Right cardiac atrium (tissue), 5 donors: ENCODE measurements at regions of chr5 and their contacts with region 1.

Region 1: GRCh38 chr5:19608444-19609002 is 379.5 kb downstream of the CDH18 start:
- DNase-seq: no peak
- ATAC-seq: no peak
- H3K4me3 ChIP-seq: no peak overlapping the region
- H3K27ac ChIP-seq: no peak overlapping the region
- H3K4me1 ChIP-seq: no peaks in the 10 kb centered on the region
- H3K27me3 ChIP-seq: no peaks in the 10 kb centered on the region

Region 2: DNA sequence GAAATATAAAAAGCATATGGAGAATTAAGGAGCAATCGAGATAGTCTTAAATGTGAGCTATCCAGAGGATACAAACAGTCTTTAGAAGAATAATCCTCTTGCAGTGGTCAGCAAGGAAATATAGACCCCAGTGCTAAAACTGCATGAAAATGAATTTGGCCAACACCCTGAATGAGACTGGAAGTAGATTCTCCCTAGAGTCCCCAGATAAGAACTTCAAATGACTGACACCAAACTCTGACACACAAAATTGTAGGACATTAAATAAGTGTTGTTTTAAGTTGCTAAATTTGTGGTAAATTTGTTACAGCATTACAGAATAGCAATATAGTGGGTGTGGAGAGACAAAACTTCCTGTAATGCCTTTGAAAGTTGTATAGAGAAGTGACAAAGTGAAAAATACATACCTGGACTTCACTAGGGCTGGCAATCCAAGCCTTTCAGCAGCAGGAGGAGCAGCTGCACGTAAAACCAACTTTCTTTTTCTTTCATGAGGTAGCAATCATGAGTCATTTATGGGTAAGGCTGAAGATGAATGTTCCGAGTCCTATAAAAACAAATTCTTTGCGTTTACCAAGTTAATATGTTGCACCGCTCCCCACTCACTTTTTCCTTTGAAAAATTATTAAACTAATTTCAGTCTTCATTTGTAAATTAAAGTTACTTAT is 836.2 kb before region 1 on chr5:
- intact Hi-C with region 1: loop called in 1 of 4 experiments (anchors 10 kb)
- DNase-seq: no peak
- ATAC-seq: no peak
- H3K4me3 ChIP-seq: no peak overlapping the region
- H3K27ac ChIP-seq: no peak overlapping the region
- H3K4me1 ChIP-seq: no peaks in the 10 kb centered on the region
- H3K27me3 ChIP-seq: no peaks in the 10 kb centered on the region

Region 3: GRCh38 chr5:18932081-18932480 is 676.4 kb before region 1 on chr5:
- intact Hi-C with region 1: no loop called
- DNase-seq: no peak
- ATAC-seq: no peak
- H3K4me3 ChIP-seq: no peak overlapping the region
- H3K27ac ChIP-seq: no peak overlapping the region
- H3K4me1 ChIP-seq: no peaks in the 10 kb centered on the region
- H3K27me3 ChIP-seq: no peaks in the 10 kb centered on the region

Region 4: DNA sequence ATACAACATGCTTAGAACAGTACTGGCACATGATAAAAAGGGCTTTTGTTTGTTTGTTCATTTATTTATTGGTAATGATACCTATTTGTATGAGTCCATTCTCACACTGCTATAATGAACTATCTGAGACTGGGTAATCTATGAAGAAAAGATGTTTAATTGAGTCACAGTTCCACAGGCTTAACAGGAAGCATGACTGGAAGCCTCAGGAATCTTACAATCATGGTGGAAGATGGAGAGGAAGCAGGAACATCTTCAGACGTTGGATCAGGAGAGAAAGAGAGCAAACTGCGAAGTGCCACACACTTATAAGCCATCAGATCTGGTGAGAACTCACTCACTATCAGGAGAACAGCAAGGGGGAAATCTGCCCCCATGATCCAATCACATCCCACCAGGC is 468.2 kb before region 1 on chr5:
- intact Hi-C with region 1: no loop called
- DNase-seq: no peak
- ATAC-seq: no peak
- H3K4me3 ChIP-seq: no peak overlapping the region
- H3K27ac ChIP-seq: no peak overlapping the region
- H3K4me1 ChIP-seq: no peaks in the 10 kb centered on the region
- H3K27me3 ChIP-seq: no peaks in the 10 kb centered on the region

Region 5: GRCh38 chr5:19733612-19734495 is 125.3 kb after region 1 on chr5:
- intact Hi-C with region 1: no loop called
- DNase-seq: no peak
- ATAC-seq: no peak
- H3K4me3 ChIP-seq: no peak overlapping the region
- H3K27ac ChIP-seq: no peak overlapping the region
- H3K4me1 ChIP-seq: no peaks in the 10 kb centered on the region
- H3K27me3 ChIP-seq: no peaks in the 10 kb centered on the region